T-cell (primary cell): ENCODE measurements at regions of chrX and their contacts with region 1.

Region 1: GRCh38 chrX:148681605-148682004 is 181.2 kb downstream of the AFF2 start:
- DNase-seq: no peak
- ATAC-seq: no peak
- H3K4me3 ChIP-seq: no peak overlapping the region
- H3K4me3 Mint-ChIP-seq: no peak overlapping the region
- H3K27ac ChIP-seq: no peak overlapping the region
- H3K27ac Mint-ChIP-seq: no peak overlapping the region
- H3K4me1 ChIP-seq: no peaks in the 10 kb centered on the region
- H3K4me1 Mint-ChIP-seq: no peaks in the 10 kb centered on the region
- H3K27me3 ChIP-seq: no peaks in the 10 kb centered on the region
- H3K27me3 Mint-ChIP-seq: peaks cover 0 to 4% of the 10 kb centered on the region in 2 donors

Region 2: GRCh38 chrX:148459343-148459742 is 222.3 kb before region 1 on chrX:
- CTCF ChIA-PET with region 1: interaction called in 1 of 2 experiments, 10 read pairs
- POLR2A ChIA-PET with region 1: no interaction called
- DNase-seq: no peak
- ATAC-seq: no peak
- H3K4me3 ChIP-seq: no peak overlapping the region
- H3K4me3 Mint-ChIP-seq: no peak overlapping the region
- H3K27ac ChIP-seq: no peak overlapping the region
- H3K27ac Mint-ChIP-seq: no peak overlapping the region
- H3K4me1 ChIP-seq: peaks cover 0 to 2% of the 10 kb centered on the region in 2 experiments
- H3K4me1 Mint-ChIP-seq: peaks cover 0 to 8% (median 6%) of the 10 kb centered on the region in 3 donors
- H3K27me3 ChIP-seq: no peaks in the 10 kb centered on the region
- H3K27me3 Mint-ChIP-seq: peaks cover 0 to 19% of the 10 kb centered on the region in 2 donors

Region 3: DNA sequence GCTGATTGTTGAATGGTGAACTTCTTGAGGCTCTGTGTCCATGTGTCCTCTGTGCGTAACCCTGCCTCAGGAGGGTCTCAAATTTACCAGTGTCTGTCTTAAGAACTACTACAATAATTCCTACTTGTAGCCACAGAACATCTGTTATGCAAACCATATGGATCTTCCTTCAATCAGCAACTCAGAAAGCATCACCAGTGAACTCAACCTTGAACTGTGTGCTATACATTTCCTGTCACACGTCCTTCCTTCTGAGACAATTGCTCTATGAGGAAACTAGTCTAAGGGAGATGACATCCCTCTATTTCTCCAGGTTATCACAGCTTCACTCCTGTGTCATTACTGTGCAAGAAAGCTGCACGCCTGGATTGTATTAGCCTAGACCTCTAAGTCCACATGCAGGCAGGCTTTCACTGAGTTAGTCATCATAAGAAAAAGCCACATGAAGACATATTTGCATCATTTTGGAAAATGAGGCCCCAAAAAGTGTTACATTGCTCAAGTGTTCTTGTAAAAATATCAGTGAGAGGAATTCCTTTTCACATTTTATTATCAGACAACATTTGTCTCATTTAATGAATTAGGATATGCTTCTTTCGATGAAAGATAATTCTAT is 23.4 kb before region 1 on chrX:
- CTCF ChIA-PET with region 1: no interaction called
- POLR2A ChIA-PET with region 1: no interaction called
- DNase-seq: no peak
- ATAC-seq: no peak
- H3K4me3 ChIP-seq: no peak overlapping the region
- H3K4me3 Mint-ChIP-seq: no peak overlapping the region
- H3K27ac ChIP-seq: no peak overlapping the region
- H3K27ac Mint-ChIP-seq: no peak overlapping the region
- H3K4me1 ChIP-seq: no peaks in the 10 kb centered on the region
- H3K4me1 Mint-ChIP-seq: no peaks in the 10 kb centered on the region
- H3K27me3 ChIP-seq: no peaks in the 10 kb centered on the region
- H3K27me3 Mint-ChIP-seq: peaks cover 0 to 10% of the 10 kb centered on the region in 2 donors